A549 (cell line): ENCODE measurements at regions of chr12 and their contacts with region 1.

Region 1: GRCh38 chr12:95532851-95533250 is 18.4 kb downstream of the USP44 start:
- DNase-seq: no peak
- ATAC-seq: no peak
- H3K4me3 ChIP-seq: no peak overlapping the region
- H3K27ac ChIP-seq: no peak overlapping the region
- H3K4me1 ChIP-seq: no peaks in the 10 kb centered on the region
- CTCF ChIP-seq: no peak
- EP300 ChIP-seq: no peak
- POLR2A ChIP-seq: no peak
- RAD21 ChIP-seq: no peak

Region 2: GRCh38 chr12:94545935-94546771 is 986.7 kb before region 1 on chr12:
- CTCF ChIA-PET with region 1: interaction called, 10 read pairs
- POLR2A ChIA-PET with region 1: no interaction called
- DNase-seq: peak; percentile 70 to 75
- ATAC-seq: peak; percentile 90 to 98
- H3K4me3 ChIP-seq: no peak overlapping the region
- H3K27ac ChIP-seq: no peak overlapping the region
- H3K4me1 ChIP-seq: no peaks in the 10 kb centered on the region
- CTCF ChIP-seq: peak; percentile 56
- EP300 ChIP-seq: no peak
- POLR2A ChIP-seq: no peak
- RAD21 ChIP-seq: peak; percentile 79 to 91

Region 3: DNA sequence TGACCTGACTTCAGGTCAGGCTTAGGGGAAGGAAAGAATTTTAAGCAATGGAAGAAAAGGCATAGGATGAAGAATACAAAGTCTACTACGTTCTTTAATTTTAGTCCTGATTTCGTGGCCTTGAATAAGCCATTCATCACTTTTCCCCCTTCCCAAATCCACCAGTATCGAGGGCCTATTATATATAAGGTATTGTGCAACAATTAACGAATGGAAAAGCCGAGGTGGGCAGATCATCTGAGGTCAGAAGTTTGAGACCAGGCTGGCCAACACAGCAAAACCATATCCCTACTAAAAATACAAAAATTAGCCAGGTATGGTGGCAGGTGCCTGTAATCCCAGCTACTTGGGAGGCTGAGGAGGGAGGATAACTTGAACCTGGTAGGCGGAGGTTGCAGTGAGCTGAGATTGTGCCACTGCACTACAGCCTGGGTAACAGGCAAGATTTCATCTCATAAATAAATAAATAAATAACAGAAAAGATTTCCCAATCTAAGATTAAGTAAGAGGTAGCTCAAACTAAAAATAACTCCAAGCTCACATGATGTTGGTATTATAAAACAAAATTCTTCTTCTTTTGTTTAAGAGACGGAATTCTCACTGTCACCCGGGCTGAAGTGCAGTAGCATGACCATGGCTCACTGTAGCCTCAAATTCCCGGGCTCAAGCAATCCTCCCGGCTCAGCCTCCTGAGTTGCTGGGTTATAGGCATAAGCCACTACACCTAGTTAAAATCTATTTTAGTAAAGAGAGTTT is 401.1 kb before region 1 on chr12:
- CTCF ChIA-PET with region 1: no interaction called
- POLR2A ChIA-PET with region 1: no interaction called
- DNase-seq: no peak
- ATAC-seq: no peak
- H3K4me3 ChIP-seq: no peak overlapping the region
- H3K27ac ChIP-seq: peak overlapping the region in 1 of 2 experiments; percentile 73; a peak in 1 of 6 replicates
- H3K4me1 ChIP-seq: peaks cover 20% of the 10 kb centered on the region
- CTCF ChIP-seq: no peak
- EP300 ChIP-seq: no peak
- POLR2A ChIP-seq: no peak
- RAD21 ChIP-seq: no peak

Region 4: GRCh38 chr12:95473884-95474659 is 58.8 kb before region 1 on chr12 and contains the start of gene METAP2:
- CTCF ChIA-PET with region 1: interaction called, 7 read pairs
- POLR2A ChIA-PET with region 1: interaction called, 12 read pairs
- DNase-seq: peak; percentile 97 to 98
- ATAC-seq: peak; percentile 99 to 100
- H3K4me3 ChIP-seq: peak within 1 kb of the TSS; percentile 82
- H3K27ac ChIP-seq: peak within 1 kb of the TSS; percentile 95 to 97
- H3K4me1 ChIP-seq: peaks cover 9% of the 10 kb centered on the region; the same call in 1 of the 3 replicates
- CTCF ChIP-seq: no peak
- EP300 ChIP-seq: no peak
- POLR2A ChIP-seq: peak; percentile 93
- RAD21 ChIP-seq: no peak
- polyA plus RNA-seq, gene METAP2: 134 and 205 TPM in 2 replicates

Region 5: DNA sequence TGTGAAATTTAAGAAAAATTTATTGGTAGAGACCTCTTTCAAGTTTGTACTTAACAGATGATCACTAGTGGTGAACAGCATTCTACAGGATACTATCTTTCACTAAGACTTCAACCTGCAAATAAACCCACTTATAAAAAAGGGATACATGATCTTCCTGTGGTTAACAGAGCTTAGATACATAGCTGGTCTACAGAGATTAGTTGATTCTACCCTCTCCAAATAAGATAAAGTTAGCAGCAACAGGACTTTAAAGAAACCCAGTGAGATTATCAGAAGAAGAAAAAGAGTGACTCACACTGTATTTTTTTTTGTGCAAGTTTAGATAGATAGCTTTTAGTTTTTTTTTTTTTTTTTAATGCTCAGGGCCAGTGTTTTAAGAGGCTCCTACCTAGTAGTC is 16.1 kb before region 1 on chr12:
- CTCF ChIA-PET with region 1: interaction called, 12 read pairs
- POLR2A ChIA-PET with region 1: no interaction called
- DNase-seq: no peak
- ATAC-seq: no peak
- H3K4me3 ChIP-seq: no peak overlapping the region
- H3K27ac ChIP-seq: no peak overlapping the region
- H3K4me1 ChIP-seq: no peaks in the 10 kb centered on the region
- CTCF ChIP-seq: no peak
- EP300 ChIP-seq: no peak
- POLR2A ChIP-seq: no peak
- RAD21 ChIP-seq: no peak

Region 6: DNA sequence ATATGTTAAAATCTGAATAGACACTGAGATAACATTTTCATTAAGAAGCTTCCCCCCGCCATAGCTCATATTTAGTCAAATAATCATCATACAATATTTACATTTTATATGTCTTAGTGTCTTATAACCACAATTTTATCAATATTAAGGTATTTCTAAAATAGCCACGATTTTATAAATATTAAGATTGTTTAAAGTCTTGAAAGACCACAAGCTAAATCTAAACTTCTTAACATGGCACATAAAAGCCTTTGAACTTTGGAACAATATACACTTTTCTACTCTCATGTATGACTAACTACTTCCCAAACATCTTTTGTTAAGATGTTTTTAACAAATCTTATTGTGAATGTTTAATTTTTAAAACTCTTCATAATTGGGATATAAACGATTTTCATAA is 11.9 kb after region 1 on chr12:
- CTCF ChIA-PET with region 1: interaction called, 12 read pairs
- POLR2A ChIA-PET with region 1: no interaction called
- DNase-seq: no peak
- ATAC-seq: no peak
- H3K4me3 ChIP-seq: no peak overlapping the region
- H3K27ac ChIP-seq: no peak overlapping the region
- H3K4me1 ChIP-seq: no peaks in the 10 kb centered on the region
- CTCF ChIP-seq: no peak
- EP300 ChIP-seq: no peak
- POLR2A ChIP-seq: no peak
- RAD21 ChIP-seq: no peak